PC-9 (cell line): ENCODE measurements at regions of chr1 and their contacts with region 1.

Region 1: DNA sequence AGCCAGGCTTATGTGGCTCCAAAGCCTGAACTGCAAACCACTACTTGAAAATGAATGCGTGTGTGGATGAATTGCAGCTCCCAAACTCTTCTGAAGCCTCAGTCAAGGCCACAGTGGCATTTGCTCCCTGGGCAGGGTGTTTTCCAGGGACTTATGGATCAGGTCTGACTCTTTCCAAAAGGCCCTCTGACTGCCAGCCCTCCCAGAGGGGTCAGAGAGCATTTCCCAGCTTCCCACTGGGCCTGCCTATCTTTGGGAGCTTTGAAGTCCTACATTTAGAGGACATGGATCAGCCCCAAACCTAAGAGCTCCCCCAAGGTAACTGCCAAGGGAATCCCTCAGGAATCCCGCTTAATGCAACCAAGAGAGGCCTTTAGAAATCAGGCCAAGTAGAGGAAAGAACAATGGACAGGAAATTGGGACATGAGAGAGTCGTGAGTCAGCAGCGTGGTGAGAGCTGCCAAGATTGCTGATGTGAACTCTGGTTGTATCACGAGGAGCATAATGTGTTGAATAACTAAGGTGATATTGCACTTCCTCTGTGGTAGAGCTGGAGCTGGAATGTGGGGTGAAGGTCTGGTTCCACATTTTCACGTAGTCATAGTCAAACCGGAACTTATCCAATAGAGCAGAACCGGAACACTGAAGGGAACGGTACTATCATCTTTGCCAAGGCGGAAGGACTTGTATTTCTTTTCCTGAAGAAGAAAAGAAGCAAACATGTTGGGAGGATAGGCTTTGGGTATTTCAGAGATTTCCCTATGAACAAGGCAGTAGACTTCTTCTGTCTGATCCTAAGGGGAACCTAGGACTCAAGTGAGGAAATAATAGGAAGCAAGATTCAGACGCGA is 99.4 kb upstream of the JUN start:
- DNase-seq: peak; percentile 87 to 98
- H3K4me3 ChIP-seq: peak overlapping the region; percentile 16; the same call in 1 of the 2 replicates
- H3K27ac ChIP-seq: peak overlapping the region; percentile 99
- H3K4me1 ChIP-seq: peaks cover 68% of the 10 kb centered on the region
- H3K27me3 ChIP-seq: no peaks in the 10 kb centered on the region
- CTCF ChIP-seq: no peak

Region 2: DNA sequence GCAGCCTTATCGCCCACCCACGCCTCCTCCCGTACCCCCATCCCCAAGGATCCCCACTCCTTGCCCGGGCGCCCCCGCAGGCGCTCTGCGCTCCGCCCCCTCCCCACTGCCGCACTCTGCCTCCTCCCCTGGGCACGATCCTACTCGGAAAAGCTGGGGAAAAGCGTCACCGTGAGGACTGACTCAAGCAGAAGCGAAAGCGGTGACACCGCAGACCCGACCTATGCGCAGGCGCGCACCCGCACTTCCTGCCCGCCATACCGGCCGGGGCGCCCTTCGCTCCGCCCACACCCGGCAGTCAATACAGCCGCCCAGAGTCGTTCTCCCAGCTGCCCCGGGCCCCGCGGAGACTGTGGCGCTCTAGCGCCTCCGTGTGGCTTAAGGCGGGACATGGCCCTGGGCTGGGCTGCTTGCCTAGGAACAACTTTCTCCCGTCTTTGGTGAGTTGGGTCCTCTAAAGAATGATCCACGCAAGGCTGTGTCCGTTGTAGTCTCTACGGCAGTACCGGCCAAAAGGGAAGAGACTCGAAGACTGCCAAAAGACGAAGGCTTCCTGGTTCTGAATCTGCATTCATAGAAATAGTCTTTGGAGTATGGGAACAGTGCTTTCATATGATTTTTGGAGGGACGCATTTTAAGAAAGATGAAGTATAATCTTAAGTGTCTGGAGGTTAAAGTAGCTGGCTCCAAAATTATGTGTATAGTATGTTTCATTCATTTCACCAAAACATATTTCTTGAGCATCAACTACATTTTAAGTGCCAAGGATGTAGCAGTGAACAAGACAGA is 336.5 kb before region 1 on chr1 and contains the start of gene OMA1:
- CTCF ChIA-PET with region 1: no interaction called
- POLR2A ChIA-PET with region 1: no interaction called
- intact Hi-C with region 1: no loop called
- DNase-seq: peak; percentile 85 to 98
- H3K4me3 ChIP-seq: peak within 1 kb of the TSS; percentile 85
- H3K27ac ChIP-seq: peak within 1 kb of the TSS; percentile 79
- H3K4me1 ChIP-seq: peaks cover 11% of the 10 kb centered on the region
- H3K27me3 ChIP-seq: no peaks in the 10 kb centered on the region
- CTCF ChIP-seq: peak; percentile 90
- total RNA-seq, gene OMA1: 27.9 and 29.0 TPM in 2 replicates

Region 3: DNA sequence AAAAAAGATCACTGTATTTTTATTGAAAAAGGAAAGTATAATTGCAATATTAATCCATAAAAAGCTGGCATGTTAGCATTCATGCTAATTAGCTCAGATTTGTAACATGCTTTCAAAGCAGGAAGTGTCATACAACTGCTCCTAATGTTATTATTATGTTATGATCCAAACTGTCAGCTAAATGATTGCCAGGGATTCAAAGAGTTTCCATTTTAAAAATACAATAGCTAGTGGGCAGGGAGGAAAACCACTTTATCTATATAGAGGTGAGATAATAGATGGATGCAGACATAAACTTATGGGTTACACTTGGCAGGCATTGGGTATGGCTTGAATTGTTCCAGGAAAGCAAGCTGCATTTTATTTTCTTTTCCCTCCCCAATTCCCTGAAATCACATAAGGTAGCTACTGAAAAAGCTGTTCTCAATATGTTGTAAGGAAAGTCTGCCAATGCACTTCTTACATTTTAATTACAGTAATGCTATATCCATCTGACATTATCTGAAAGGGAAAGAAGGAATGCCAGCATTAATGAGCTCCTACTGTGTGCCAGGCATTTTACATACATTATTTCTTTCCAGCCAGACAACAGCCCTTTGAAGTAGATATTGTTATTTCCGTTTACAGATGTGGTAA is 173.6 kb before region 1 on chr1:
- CTCF ChIA-PET with region 1: no interaction called
- POLR2A ChIA-PET with region 1: no interaction called
- intact Hi-C with region 1: no loop called
- DNase-seq: no peak
- H3K4me3 ChIP-seq: no peak overlapping the region
- H3K27ac ChIP-seq: no peak overlapping the region
- H3K4me1 ChIP-seq: 0 out of 2 replicates have a peak, but pooled peaks cover 5% of the 10 kb centered on the region
- H3K27me3 ChIP-seq: no peaks in the 10 kb centered on the region
- CTCF ChIP-seq: no peak

Region 4: DNA sequence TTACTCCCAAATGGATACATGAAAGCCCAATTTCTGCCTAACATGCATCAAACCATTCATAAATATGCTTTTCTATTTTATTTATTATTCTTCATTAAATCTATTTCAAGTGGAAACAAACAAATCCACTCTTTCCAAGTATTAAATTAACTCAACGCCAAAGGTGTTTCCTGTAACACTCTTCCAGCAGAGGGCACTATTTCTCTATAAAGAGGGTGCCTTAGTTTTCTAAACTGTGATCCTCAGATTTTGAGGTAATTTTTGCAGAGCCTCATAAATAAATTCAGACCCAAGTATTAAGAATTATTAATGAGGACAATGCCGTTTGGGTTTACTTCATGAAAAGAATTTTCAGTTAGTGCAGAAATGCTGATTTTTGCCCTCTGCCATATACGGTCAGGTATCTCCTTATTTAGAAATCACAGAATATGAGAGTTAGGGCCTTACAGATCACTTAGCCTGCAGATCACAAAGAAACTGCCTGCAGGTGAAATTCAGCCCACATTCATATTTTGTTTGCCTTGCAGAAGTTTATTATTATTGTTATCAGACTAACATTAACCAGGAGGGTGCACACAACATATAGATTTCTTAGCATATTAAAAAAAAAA is 143.3 kb before region 1 on chr1:
- CTCF ChIA-PET with region 1: no interaction called
- POLR2A ChIA-PET with region 1: no interaction called
- intact Hi-C with region 1: loop called (anchors 5 kb)
- DNase-seq: peak in 1 of 2 experiments; percentile 56
- H3K4me3 ChIP-seq: no peak overlapping the region
- H3K27ac ChIP-seq: no peak overlapping the region
- H3K4me1 ChIP-seq: peaks cover 12% of the 10 kb centered on the region
- H3K27me3 ChIP-seq: no peaks in the 10 kb centered on the region
- CTCF ChIP-seq: peak; percentile 95

Region 5: DNA sequence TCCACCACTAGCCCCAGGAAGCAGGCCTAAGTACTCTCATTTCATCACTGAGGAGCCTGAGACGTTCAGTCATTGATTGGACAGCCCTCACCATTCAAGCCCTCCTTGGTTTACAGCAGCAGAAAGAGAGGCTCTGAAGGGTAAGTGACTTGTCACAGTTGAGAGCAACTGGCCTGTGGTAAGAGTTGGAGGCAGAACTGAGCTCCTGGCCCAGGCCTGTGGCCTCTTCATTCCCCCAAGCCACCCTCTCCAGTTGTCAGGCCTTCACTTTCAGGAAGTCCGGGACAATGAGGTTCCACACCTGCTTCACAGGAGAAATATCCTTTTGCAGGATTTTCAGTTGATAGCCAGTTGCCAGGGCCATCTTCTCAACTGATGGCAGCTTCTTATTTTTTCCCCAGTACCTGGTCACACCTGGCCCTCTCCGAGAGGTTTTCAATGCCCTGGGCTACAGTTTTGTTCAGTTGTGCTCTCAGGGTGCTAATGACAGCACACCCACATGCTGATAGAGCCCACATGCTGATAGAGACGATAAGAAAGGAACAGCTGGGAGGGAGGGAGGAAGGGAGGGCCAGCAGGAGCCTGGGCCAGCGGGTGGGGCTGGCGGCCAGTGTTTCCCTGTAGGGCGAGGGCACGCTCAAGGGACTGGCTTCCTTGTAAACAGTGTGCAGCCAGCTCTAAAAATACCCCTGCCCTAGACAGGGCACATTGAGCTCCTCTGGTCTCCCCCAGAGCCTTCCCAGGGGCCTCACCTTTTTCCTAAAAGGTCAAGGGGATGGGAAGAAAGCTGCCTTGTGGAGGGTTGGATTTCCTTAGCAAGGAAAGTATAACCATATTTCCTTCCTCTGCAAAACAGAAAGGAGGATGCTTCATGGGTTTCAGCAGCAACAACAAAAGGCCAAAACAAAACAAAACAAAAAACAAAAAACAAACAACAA is 13.3 kb after region 1 on chr1:
- CTCF ChIA-PET with region 1: no interaction called
- POLR2A ChIA-PET with region 1: interaction called, 10 read pairs
- intact Hi-C with region 1: no loop called
- DNase-seq: peak; percentile 62 to 78
- H3K4me3 ChIP-seq: no peak overlapping the region
- H3K27ac ChIP-seq: peak overlapping the region; percentile 33; the same call in 1 of the 2 replicates
- H3K4me1 ChIP-seq: peaks cover 39% of the 10 kb centered on the region
- H3K27me3 ChIP-seq: no peaks in the 10 kb centered on the region
- CTCF ChIP-seq: no peak

Region 6: GRCh38 chr1:58932859-58933598 is 49.8 kb after region 1 on chr1:
- CTCF ChIA-PET with region 1: no interaction called
- POLR2A ChIA-PET with region 1: interaction called, 11 read pairs
- intact Hi-C with region 1: loop called (anchors 1 kb)
- DNase-seq: peak; percentile 97 to 98
- H3K4me3 ChIP-seq: peak overlapping the region; percentile 13; the same call in 1 of the 2 replicates
- H3K27ac ChIP-seq: peak overlapping the region; percentile 94
- H3K4me1 ChIP-seq: peaks cover 76% of the 10 kb centered on the region
- H3K27me3 ChIP-seq: no peaks in the 10 kb centered on the region
- CTCF ChIP-seq: no peak

Region 7: DNA sequence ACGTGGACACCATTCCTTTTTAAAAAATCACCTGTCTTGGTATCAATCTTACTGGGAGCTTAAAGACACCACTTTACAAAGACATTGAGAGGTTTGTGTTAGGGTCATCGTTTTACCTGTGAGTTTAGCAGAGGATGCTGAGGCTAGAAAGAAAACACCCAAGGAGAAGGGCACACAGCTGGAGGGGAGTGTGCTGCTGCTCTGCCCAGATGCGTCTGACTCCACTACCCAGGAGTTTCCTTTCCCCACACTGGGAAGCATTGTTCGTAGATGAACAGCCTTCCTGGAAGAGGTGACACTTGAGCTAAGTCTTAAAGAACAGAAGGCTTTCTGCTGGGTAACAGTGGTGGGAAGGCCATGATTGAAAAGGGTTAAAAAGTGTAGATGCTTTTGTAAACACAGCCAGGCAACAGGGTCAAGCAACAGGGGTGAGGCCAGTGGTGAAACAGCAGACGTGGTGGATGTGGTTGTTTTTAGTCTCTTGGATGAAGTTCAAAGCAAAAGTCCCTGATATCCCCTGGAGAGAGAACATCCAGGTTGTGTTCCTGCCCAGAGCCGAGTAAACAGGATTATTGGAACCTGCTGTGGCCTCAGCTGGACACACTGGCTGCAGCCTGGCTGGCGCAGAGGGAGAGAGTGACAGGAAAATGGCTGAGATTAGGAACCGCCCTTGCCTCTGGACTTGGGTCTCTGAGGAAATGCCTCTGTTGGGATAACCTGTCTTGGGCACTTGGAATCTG is 99.2 kb after region 1 on chr1:
- CTCF ChIA-PET with region 1: no interaction called
- POLR2A ChIA-PET with region 1: no interaction called
- intact Hi-C with region 1: no loop called
- DNase-seq: no peak
- H3K4me3 ChIP-seq: no peak overlapping the region
- H3K27ac ChIP-seq: no peak overlapping the region
- H3K4me1 ChIP-seq: 0 out of 2 replicates have a peak, but pooled peaks cover 8% of the 10 kb centered on the region
- H3K27me3 ChIP-seq: no peaks in the 10 kb centered on the region
- CTCF ChIP-seq: no peak

Region 8: GRCh38 chr1:59143133-59143487 is 259.8 kb after region 1 on chr1:
- CTCF ChIA-PET with region 1: no interaction called
- POLR2A ChIA-PET with region 1: interaction called, 6 read pairs
- intact Hi-C with region 1: loop called (anchors 1 kb)
- DNase-seq: peak; percentile 76 to 99
- H3K4me3 ChIP-seq: peak overlapping the region; percentile 14; the same call in 1 of the 2 replicates
- H3K27ac ChIP-seq: peak overlapping the region; percentile 94
- H3K4me1 ChIP-seq: peaks cover 87% of the 10 kb centered on the region
- H3K27me3 ChIP-seq: no peaks in the 10 kb centered on the region
- CTCF ChIP-seq: no peak